ENCODE measurements at regions of chr3 and their contacts with region 1.

Region 1: GRCh38 chr3:113575206-113575605 is 42.9 kb downstream of the SIDT1 start:
- DNase-seq: no peak
- ATAC-seq: no peak
- H3K4me3 Mint-ChIP-seq: no peak overlapping the region
- H3K27ac Mint-ChIP-seq: no peak overlapping the region
- H3K4me1 Mint-ChIP-seq: peaks cover 6% of the 10 kb centered on the region
- H3K27me3 Mint-ChIP-seq: no peaks in the 10 kb centered on the region

Region 2: DNA sequence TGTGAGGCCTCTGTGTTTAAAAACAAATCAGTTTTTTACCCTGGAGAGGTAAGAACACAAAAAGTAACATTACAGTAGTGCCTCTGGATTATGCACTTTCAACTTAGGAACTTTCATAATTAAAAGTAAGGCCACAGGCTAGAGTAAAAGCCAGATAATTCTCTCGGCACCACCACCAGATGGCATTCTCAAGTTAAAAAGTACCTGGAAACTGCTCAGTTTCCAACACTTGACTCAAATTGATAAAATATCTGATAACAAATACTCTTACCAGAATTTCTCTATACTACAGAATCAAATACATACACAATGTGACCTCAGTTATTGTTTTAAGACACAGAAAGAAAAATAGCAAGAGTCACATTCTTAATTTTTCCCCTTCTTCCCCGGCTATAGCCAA is 80.2 kb before region 1 on chr3:
- CTCF ChIA-PET with region 1: interaction called, 62 read pairs
- DNase-seq: peak; percentile 61
- ATAC-seq: peak; percentile 60
- H3K4me3 Mint-ChIP-seq: no peak overlapping the region
- H3K27ac Mint-ChIP-seq: no peak overlapping the region
- H3K4me1 Mint-ChIP-seq: no peaks in the 10 kb centered on the region
- H3K27me3 Mint-ChIP-seq: no peaks in the 10 kb centered on the region

Region 3: GRCh38 chr3:113514265-113514769 is 60.9 kb before region 1 on chr3:
- CTCF ChIA-PET with region 1: interaction called, 24 read pairs
- DNase-seq: no peak
- ATAC-seq: no peak
- H3K4me3 Mint-ChIP-seq: no peak overlapping the region
- H3K27ac Mint-ChIP-seq: no peak overlapping the region
- H3K4me1 Mint-ChIP-seq: peaks cover 12% of the 10 kb centered on the region
- H3K27me3 Mint-ChIP-seq: peaks cover 25% of the 10 kb centered on the region

Region 4: DNA sequence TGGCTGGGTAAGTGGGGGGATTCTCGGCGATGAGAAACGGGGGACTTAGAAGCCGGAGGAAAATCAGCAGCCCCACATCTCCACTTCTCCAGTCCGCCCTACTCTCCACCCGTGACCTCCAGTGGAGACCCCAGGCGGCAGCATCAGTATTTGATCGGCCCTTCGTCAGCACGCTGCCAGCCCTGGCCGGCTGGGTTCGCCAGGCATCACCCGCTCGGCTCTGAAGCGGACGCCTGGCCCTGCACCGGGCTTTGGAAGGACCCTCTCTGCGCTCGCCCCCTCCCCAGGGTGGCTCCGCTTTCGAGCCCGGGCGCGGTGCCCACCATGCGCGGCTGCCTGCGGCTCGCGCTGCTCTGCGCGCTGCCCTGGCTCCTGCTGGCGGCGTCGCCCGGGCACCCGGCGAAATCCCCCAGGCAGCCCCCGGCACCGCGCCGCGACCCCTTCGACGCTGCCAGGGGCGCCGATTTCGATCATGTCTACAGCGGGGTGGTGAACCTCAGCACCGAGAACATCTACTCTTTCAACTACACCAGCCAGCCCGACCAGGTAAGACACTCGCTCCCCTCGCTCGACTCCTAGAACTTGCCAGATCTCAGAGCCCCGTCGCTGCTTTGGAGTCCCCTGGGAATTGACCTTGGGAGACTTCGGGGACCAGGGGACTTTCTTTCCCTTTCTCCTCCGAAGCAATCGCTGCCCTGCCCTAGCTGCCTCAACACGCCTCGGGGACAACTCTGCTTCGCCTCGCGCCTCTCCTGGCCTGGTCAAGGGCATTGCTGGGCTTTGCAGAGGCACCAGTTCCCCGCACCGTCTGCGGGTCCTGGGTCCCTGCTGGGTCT is 42.3 kb before region 1 on chr3:
- CTCF ChIA-PET with region 1: interaction called, 11 read pairs
- DNase-seq: peak; percentile 68
- ATAC-seq: peak; percentile 52
- H3K4me3 Mint-ChIP-seq: peak overlapping the region; percentile 99
- H3K27ac Mint-ChIP-seq: peak overlapping the region; percentile 100
- H3K4me1 Mint-ChIP-seq: peaks cover 49% of the 10 kb centered on the region
- H3K27me3 Mint-ChIP-seq: no peaks in the 10 kb centered on the region

Region 5: DNA sequence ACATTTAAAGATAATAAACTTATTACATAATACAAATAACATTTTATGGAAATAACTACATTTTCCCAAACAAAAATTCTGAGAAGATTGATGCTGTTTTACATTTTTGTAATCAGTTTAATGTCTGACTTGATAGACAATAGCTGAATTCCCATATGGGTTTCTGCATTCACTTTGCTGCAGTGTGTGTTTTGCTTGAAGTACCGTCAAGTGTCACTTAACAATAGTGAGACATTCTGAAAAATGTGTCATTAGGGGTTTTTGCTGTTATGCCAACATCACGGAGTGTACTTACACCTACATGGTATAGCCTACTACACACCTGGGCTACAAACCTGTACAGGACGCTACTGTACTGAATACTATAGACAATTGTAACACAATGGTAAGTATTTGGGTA is 63.7 kb after region 1 on chr3:
- CTCF ChIA-PET with region 1: no interaction called
- DNase-seq: no peak
- ATAC-seq: no peak
- H3K4me3 Mint-ChIP-seq: no peak overlapping the region
- H3K27ac Mint-ChIP-seq: no peak overlapping the region
- H3K4me1 Mint-ChIP-seq: peaks cover 6% of the 10 kb centered on the region
- H3K27me3 Mint-ChIP-seq: no peaks in the 10 kb centered on the region